IMR-90 (cell line): ENCODE measurements at regions of chr5 and their contacts with region 1.

Region 1: GRCh38 chr5:71782771-71783770 is 64.0 kb downstream of the CARTPT start:
- DNase-seq: peak; percentile 75
- ATAC-seq: peak; percentile 95
- H3K4me3 ChIP-seq: peak overlapping the region; percentile 7; the same call in 1 of the 2 replicates
- H3K27ac ChIP-seq: 0 out of 2 replicates have a peak overlapping the region, but pooled peaks have one; percentile 7
- H3K4me1 ChIP-seq: peaks cover 2% of the 10 kb centered on the region; the same call in 1 of the 2 replicates
- H3K27me3 ChIP-seq: peaks cover 12% of the 10 kb centered on the region
- CTCF ChIP-seq: peak; percentile 85
- POLR2A ChIP-seq: 0 out of 2 replicates have a peak, but pooled peaks have one; percentile 40
- RAD21 ChIP-seq: peak; percentile 87

Region 2: GRCh38 chr5:72018146-72018803 is 235.2 kb after region 1 on chr5:
- CTCF ChIA-PET with region 1: no interaction called
- POLR2A ChIA-PET with region 1: no interaction called
- dilution Hi-C with region 1: no loop called
- in situ Hi-C with region 1: no loop called
- intact Hi-C with region 1: loop called (anchors 1 kb)
- DNase-seq: peak; percentile 58
- ATAC-seq: peak; percentile 88
- H3K4me3 ChIP-seq: no peak overlapping the region
- H3K27ac ChIP-seq: no peak overlapping the region
- H3K4me1 ChIP-seq: no peaks in the 10 kb centered on the region
- H3K27me3 ChIP-seq: peaks cover 27% of the 10 kb centered on the region
- CTCF ChIP-seq: peak; percentile 84
- POLR2A ChIP-seq: no peak
- RAD21 ChIP-seq: peak; percentile 69

Region 3: GRCh38 chr5:72036951-72037350 is 253.9 kb after region 1 on chr5:
- CTCF ChIA-PET with region 1: no interaction called
- POLR2A ChIA-PET with region 1: no interaction called
- dilution Hi-C with region 1: no loop called
- in situ Hi-C with region 1: no loop called
- intact Hi-C with region 1: no loop called
- DNase-seq: peak; percentile 4
- ATAC-seq: peak; percentile 46
- H3K4me3 ChIP-seq: no peak overlapping the region
- H3K27ac ChIP-seq: no peak overlapping the region
- H3K4me1 ChIP-seq: no peaks in the 10 kb centered on the region
- H3K27me3 ChIP-seq: peaks cover 38% of the 10 kb centered on the region
- CTCF ChIP-seq: no peak
- POLR2A ChIP-seq: no peak
- RAD21 ChIP-seq: no peak